CD8-positive, alpha-beta memory T cell (primary cell): ENCODE measurements at regions of chr14 and their contacts with region 1.

Region 1: GRCh38 chr14:106506881-106507305 is 980.5 kb downstream of the TMEM121 start:
- DNase-seq: peak; percentile 42 to 82 (median 72)
- H3K4me3 ChIP-seq: peak overlapping the region; percentile 60
- H3K4me3 Mint-ChIP-seq: peak overlapping the region; percentile 44 to 91 (median 86)
- H3K27ac ChIP-seq: peak overlapping the region; percentile 55
- H3K27ac Mint-ChIP-seq: peak overlapping the region; percentile 85 to 97 (median 94)
- H3K4me1 ChIP-seq: peaks cover 64% of the 10 kb centered on the region
- H3K4me1 Mint-ChIP-seq: peaks cover 71 to 78% (median 78%) of the 10 kb centered on the region in 3 donors
- H3K27me3 ChIP-seq: no peaks in the 10 kb centered on the region
- H3K27me3 Mint-ChIP-seq: peaks cover 0 to 4% of the 10 kb centered on the region in 2 donors

Region 2: DNA sequence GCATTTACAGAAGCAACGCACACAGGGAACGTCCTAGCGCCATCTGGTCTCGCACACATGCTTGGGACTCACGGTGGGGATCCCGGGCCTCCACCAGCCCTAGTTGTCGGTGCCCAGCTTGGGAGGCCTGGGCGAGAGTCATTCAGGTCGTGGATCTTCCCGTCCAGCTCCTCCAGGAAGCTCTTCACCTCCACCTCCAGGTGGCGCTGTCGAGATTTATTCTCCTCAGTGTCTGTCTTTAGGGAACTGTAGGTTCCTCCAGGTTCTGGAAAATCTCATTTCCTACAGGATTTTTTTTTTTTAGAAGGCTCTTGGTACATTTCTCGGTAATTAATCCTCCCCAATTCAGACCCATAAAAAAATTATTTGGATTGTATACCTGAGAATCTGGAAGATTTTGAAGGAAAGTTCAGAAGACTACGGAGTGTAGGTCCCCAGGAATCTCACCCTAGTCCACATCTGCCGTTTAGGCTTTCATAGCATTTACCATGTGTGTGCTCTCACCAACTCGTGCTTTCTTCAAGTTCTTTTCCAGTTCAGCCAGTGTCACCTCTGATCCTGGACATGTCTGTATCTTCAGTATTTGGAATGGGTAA is 70.5 kb before region 1 on chr14:
- CTCF ChIA-PET with region 1: interaction called, 15 read pairs
- POLR2A ChIA-PET with region 1: no interaction called
- DNase-seq: peak; percentile 48 to 68 (median 59)
- H3K4me3 ChIP-seq: no peak overlapping the region
- H3K4me3 Mint-ChIP-seq: no peak overlapping the region
- H3K27ac ChIP-seq: no peak overlapping the region
- H3K27ac Mint-ChIP-seq: no peak overlapping the region
- H3K4me1 ChIP-seq: no peaks in the 10 kb centered on the region
- H3K4me1 Mint-ChIP-seq: peaks cover 0 to 2% (median 0%) of the 10 kb centered on the region in 3 donors
- H3K27me3 ChIP-seq: no peaks in the 10 kb centered on the region
- H3K27me3 Mint-ChIP-seq: peaks cover 13 to 17% of the 10 kb centered on the region in 2 donors

Region 3: DNA sequence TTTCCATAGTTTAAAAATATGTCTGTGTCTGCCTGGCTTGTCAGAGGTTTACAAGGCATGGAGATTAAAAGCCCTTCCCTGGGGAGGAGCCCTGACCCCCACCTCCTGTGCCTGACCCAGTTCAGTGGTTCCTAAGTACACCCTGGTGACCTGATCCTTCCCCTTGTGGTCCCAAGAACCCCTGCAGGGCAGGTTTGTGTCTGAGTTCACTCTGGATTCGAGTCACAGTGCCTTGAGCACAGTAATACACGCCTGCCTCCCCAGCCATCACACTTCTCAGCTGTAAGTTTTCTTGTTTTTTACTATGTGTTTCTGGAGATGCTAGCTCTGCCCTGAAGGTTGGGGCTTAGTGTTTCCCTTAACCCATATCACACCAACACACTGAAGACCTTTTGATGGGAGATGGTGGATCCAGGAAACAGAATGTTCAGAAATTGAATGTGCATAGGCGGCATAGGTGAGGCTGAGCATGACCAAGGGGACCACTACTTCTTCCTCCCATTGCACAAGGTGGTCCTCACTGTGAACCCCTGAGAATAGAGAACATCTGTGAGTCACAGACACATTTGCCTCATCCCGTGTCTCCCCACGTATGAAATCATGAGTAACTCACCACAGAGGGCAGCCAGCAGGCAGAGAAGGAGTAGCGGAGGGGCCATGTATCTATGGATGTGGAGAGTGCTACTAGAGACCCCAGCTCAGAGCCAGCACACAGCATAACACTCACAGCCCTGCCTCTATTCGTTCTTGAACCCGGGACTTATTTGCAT is 17.6 kb before region 1 on chr14:
- CTCF ChIA-PET with region 1: interaction called, 10 read pairs
- POLR2A ChIA-PET with region 1: no interaction called
- DNase-seq: no peak
- H3K4me3 ChIP-seq: no peak overlapping the region
- H3K4me3 Mint-ChIP-seq: no peak overlapping the region
- H3K27ac ChIP-seq: no peak overlapping the region
- H3K27ac Mint-ChIP-seq: peak overlapping the region in 2 of 8 donors; percentile 28 to 50
- H3K4me1 ChIP-seq: no peaks in the 10 kb centered on the region
- H3K4me1 Mint-ChIP-seq: peaks cover 5 to 6% (median 6%) of the 10 kb centered on the region in 3 donors
- H3K27me3 ChIP-seq: no peaks in the 10 kb centered on the region
- H3K27me3 Mint-ChIP-seq: peaks cover 0 to 1% of the 10 kb centered on the region in 2 donors